ENCODE measurements at regions of chr6 and their contacts with region 1.

Region 1: DNA sequence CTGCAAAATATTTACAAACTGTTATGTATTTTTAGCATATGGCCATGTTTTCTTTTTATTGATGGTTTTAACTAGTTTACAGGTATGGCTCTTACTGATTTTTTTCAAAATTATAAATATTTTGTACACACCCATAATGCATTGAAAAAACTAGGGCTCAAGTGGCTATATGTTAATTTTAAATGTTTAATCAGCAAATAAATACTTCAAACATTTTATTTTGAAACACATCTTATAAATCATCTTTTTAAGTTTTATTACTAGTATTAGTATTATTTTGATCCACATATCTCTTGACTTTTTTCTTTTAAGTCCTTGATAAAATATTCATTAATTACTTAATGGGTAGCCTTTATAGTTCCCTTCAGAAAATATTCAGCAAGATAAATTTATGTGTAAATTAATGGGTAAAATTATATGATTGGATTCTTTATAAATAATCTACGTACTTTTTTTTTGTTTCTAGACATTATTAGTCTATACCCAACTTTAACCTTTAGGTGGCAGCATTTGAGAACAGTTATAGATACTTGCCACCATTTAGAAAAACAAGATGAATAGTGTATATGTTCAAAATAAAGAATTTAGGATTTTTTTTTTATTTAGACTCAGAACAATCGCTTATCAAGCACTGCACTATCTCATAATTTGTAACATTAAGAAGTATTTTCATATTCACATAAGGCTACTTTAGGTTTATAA is 241.9 kb downstream of the ADGRB3 start:
- DNase-seq: no peak
- H3K4me3 Mint-ChIP-seq: no peak overlapping the region
- H3K27ac Mint-ChIP-seq: no peak overlapping the region
- H3K4me1 Mint-ChIP-seq: no peaks in the 10 kb centered on the region
- H3K27me3 Mint-ChIP-seq: no peaks in the 10 kb centered on the region

Region 2: GRCh38 chr6:68958327-68958726 is 81.4 kb after region 1 on chr6:
- CTCF ChIA-PET with region 1: no interaction called
- intact Hi-C with region 1: loop called (anchors 1 kb)
- DNase-seq: no peak
- H3K4me3 Mint-ChIP-seq: no peak overlapping the region
- H3K27ac Mint-ChIP-seq: no peak overlapping the region
- H3K4me1 Mint-ChIP-seq: no peaks in the 10 kb centered on the region
- H3K27me3 Mint-ChIP-seq: no peaks in the 10 kb centered on the region

Region 3: GRCh38 chr6:69466979-69467570 is 590.1 kb after region 1 on chr6:
- CTCF ChIA-PET with region 1: no interaction called
- intact Hi-C with region 1: loop called (anchors 10 kb)
- DNase-seq: no peak
- H3K4me3 Mint-ChIP-seq: no peak overlapping the region
- H3K27ac Mint-ChIP-seq: no peak overlapping the region
- H3K4me1 Mint-ChIP-seq: no peaks in the 10 kb centered on the region
- H3K27me3 Mint-ChIP-seq: no peaks in the 10 kb centered on the region